ENCODE measurements at regions of chr3 and their contacts with region 1.

Region 1: GRCh38 chr3:180679178-180680096 is at the start of gene CCDC39:
- DNase-seq: peak; percentile 75 to 81
- H3K4me3 ChIP-seq: peak within 1 kb of the TSS; percentile 68
- H3K27ac ChIP-seq: no peak within 1 kb of the TSS
- H3K4me1 ChIP-seq: peaks cover 14% of the 10 kb centered on the region; the same call in 1 of the 2 replicates
- H3K27me3 ChIP-seq: no peaks in the 10 kb centered on the region; the same call in 1 of the 2 replicates
- CTCF ChIP-seq: no peak
- total RNA-seq, gene CCDC39: 0.26 TPM in 1 of 2 replicates, not detected in the other

Region 2: DNA sequence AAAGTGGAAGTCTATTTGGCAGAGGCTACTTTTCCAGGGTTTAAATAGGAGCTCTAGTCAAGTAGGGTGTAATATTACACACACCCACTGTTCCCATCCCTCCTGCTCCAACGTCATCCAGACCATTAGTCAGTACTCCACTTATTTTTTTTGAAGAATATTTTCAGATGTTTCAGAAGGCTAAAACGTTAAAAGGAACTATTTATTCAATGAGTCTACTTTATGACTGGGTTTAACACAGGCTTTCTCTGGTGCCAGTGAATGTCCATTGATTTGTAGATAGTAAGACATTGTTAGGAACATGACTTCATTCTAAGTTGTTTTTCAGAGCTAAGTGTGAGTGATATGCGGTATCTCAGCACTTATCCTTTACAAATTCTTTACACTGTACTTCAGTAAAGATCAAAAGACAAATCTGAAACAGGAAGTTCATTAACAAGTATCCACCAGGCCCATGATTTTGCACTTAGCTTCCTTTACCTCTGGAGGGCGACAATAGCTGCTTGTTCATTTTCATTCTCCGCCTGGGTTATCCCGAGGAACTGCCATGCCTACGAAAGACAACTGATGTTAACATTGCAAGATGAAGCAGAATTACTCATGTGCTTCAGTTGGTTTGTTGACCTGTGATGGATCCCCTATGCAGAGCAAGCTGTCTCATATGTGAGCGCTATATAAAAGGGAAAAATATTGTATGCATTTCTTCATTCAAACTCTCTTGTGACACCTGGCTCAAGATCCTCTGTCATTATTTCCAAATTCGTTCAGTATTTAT is 867.9 kb before region 1 on chr3:
- CTCF ChIA-PET with region 1: no interaction called
- POLR2A ChIA-PET with region 1: no interaction called
- intact Hi-C with region 1: loop called (anchors 1 kb)
- DNase-seq: peak in 1 of 2 experiments; percentile 45
- H3K4me3 ChIP-seq: no peak overlapping the region
- H3K27ac ChIP-seq: no peak overlapping the region
- H3K4me1 ChIP-seq: no peaks in the 10 kb centered on the region
- H3K27me3 ChIP-seq: no peaks in the 10 kb centered on the region
- CTCF ChIP-seq: peak; percentile 71

Region 3: GRCh38 chr3:180601688-180602666 is 77.5 kb before region 1 on chr3 and contains the start of gene TTC14:
- CTCF ChIA-PET with region 1: no interaction called
- POLR2A ChIA-PET with region 1: no interaction called
- intact Hi-C with region 1: loop called (anchors 2 kb)
- DNase-seq: peak; percentile 93 to 97
- H3K4me3 ChIP-seq: peak within 1 kb of the TSS; percentile 74
- H3K27ac ChIP-seq: peak within 1 kb of the TSS; percentile 77
- H3K4me1 ChIP-seq: peaks cover 18% of the 10 kb centered on the region
- H3K27me3 ChIP-seq: no peaks in the 10 kb centered on the region
- CTCF ChIP-seq: no peak
- total RNA-seq, gene TTC14: 51.1 and 55.4 TPM in 2 replicates

Region 4: GRCh38 chr3:180690061-180690460 is 10.6 kb after region 1 on chr3:
- CTCF ChIA-PET with region 1: interaction called, 16 read pairs
- POLR2A ChIA-PET with region 1: no interaction called
- intact Hi-C with region 1: no loop called
- DNase-seq: no peak
- H3K4me3 ChIP-seq: no peak overlapping the region
- H3K27ac ChIP-seq: no peak overlapping the region
- H3K4me1 ChIP-seq: no peaks in the 10 kb centered on the region
- H3K27me3 ChIP-seq: no peaks in the 10 kb centered on the region
- CTCF ChIP-seq: peak; percentile 46; the same call in 1 of the 2 replicates

Region 5: GRCh38 chr3:180912304-180913296 is 233.2 kb after region 1 on chr3 and contains the start of gene FXR1:
- CTCF ChIA-PET with region 1: no interaction called
- POLR2A ChIA-PET with region 1: no interaction called
- intact Hi-C with region 1: loop called (anchors 5 kb)
- DNase-seq: peak; percentile 90 to 97
- H3K4me3 ChIP-seq: peak within 1 kb of the TSS; percentile 63
- H3K27ac ChIP-seq: peak within 1 kb of the TSS; percentile 64
- H3K4me1 ChIP-seq: peaks cover 21% of the 10 kb centered on the region
- H3K27me3 ChIP-seq: no peaks in the 10 kb centered on the region
- CTCF ChIP-seq: peak; percentile 69
- total RNA-seq, gene FXR1: 236 and 288 TPM in 2 replicates

Measured in PC-9 (cell line).